Activated B cell treated with CpG ODN at 0.5 μM for 24 hours (primary cell): ENCODE measurements at regions of chr2 and their contacts with region 1.

Region 1: GRCh38 chr2:8761529-8762164 is 75.8 kb downstream of the KIDINS220 start:
- DNase-seq: no peak
- ATAC-seq: no peak
- H3K4me3 Mint-ChIP-seq: no peak overlapping the region
- H3K27ac Mint-ChIP-seq: no peak overlapping the region
- H3K4me1 Mint-ChIP-seq: no peaks in the 10 kb centered on the region
- H3K27me3 Mint-ChIP-seq: no peaks in the 10 kb centered on the region
- CTCF ChIP-seq: no peak

Region 2: DNA sequence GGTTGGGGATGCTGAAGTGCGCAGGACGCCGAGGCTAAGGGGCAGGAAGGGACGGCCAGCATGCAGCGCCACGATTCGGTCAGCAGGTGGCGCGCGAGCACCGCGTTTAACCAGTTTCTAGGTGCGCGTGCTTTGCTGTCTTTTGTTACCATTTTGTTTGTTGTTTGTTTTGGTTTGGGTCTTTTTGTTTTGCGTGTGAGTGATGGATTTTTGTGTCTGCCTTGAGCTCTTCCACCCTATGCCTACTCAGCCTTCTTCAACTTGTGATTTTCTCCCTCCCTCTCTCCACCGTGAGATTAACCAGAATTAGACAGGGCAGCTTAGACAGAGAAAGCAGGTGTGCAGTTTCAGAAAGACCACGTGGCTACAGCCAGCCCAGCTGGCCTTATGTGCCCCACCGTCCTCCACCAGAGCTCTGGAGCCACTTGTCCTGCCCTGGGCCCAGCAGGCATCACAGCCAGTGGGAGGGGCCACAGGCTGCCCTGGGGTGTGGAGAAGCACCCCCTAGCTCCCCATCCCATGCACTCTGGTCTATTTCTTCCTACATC is 1664.2 kb before region 1 on chr2:
- CTCF ChIA-PET with region 1: no interaction called
- POLR2A ChIA-PET with region 1: no interaction called
- intact Hi-C with region 1: loop called (anchors 1 kb)
- DNase-seq: peak; percentile 58
- ATAC-seq: peak; percentile 81
- H3K4me3 Mint-ChIP-seq: peak overlapping the region; percentile 33
- H3K27ac Mint-ChIP-seq: no peak overlapping the region
- H3K4me1 Mint-ChIP-seq: peaks cover 11% of the 10 kb centered on the region
- H3K27me3 Mint-ChIP-seq: peaks cover 23% of the 10 kb centered on the region
- CTCF ChIP-seq: peak; percentile 84

Region 3: GRCh38 chr2:7203055-7203467 is 1558.6 kb before region 1 on chr2:
- CTCF ChIA-PET with region 1: no interaction called
- POLR2A ChIA-PET with region 1: no interaction called
- intact Hi-C with region 1: loop called (anchors 5 kb)
- DNase-seq: no peak
- ATAC-seq: no peak
- H3K4me3 Mint-ChIP-seq: no peak overlapping the region
- H3K27ac Mint-ChIP-seq: no peak overlapping the region
- H3K4me1 Mint-ChIP-seq: no peaks in the 10 kb centered on the region
- H3K27me3 Mint-ChIP-seq: peaks cover 9% of the 10 kb centered on the region
- CTCF ChIP-seq: no peak

Region 4: DNA sequence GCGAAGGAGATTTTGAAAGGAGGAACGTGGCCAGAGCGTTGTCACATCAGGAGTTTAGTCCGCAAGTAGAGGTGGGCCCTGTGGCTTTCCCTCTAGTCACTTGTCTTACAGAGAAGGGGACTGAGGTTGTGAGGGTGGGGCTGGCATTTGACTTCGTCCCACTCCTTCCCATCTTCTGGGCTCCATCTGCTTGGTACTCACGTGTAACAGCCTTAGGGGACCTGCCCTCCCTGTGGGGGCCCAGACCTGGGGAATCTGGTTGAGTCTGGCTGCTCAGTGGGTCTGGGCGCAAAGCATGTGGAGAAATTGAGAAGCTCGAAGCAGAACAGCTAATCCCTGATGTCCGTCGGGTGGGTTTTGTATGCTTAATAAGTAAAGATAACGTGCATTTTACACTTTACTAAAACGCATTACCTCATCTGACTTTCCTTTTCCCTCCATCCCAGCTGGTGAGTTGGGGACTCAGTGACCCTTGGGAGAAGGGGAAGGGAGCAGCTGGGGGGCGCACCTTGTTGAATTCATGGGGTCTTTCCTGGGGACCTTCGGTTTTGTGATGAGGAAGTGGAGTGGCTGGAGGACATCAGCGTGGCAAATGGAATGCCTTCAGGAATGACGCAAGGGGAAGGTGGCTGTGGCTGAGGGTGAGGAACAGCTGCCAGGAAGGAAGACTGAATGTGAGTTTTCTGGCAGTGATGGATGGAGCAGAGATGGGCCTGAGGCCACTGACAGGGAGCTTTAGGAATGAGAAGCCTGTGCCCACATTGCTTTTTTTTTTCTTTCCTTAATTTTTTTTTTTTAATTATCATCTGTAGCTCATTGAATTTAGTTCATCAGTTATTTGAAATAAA is 489.7 kb after region 1 on chr2:
- CTCF ChIA-PET with region 1: no interaction called
- POLR2A ChIA-PET with region 1: no interaction called
- intact Hi-C with region 1: no loop called
- DNase-seq: no peak
- ATAC-seq: no peak
- H3K4me3 Mint-ChIP-seq: no peak overlapping the region
- H3K27ac Mint-ChIP-seq: no peak overlapping the region
- H3K4me1 Mint-ChIP-seq: no peaks in the 10 kb centered on the region
- H3K27me3 Mint-ChIP-seq: peaks cover 4% of the 10 kb centered on the region
- CTCF ChIP-seq: no peak